A549 (cell line): ENCODE measurements at regions of chr12 and their contacts with region 1.

Region 1: GRCh38 chr12:117111821-117112595 is 12.8 kb upstream of the TESC start:
- DNase-seq: no peak
- ATAC-seq: no peak; a peak in 1 of 6 replicates
- H3K4me3 ChIP-seq: no peak overlapping the region
- H3K27ac ChIP-seq: peak overlapping the region in 1 of 2 experiments; percentile 48; a peak in 3 of 6 replicates
- H3K4me1 ChIP-seq: no peaks in the 10 kb centered on the region
- CTCF ChIP-seq: no peak
- EP300 ChIP-seq: no peak
- POLR2A ChIP-seq: no peak
- RAD21 ChIP-seq: no peak

Region 2: GRCh38 chr12:117100251-117100650 is 11.8 kb before region 1 on chr12:
- CTCF ChIA-PET with region 1: interaction called, 19 read pairs
- POLR2A ChIA-PET with region 1: no interaction called
- DNase-seq: peak; percentile 63 to 73
- ATAC-seq: peak; percentile 73 to 78
- H3K4me3 ChIP-seq: no peak overlapping the region
- H3K27ac ChIP-seq: peak overlapping the region; percentile 41 to 94; a peak in 4 of 6 replicates
- H3K4me1 ChIP-seq: peaks cover 26% of the 10 kb centered on the region; the same call in 2 of the 3 replicates
- CTCF ChIP-seq: peak; percentile 41; the same call in 2 of the 3 replicates
- EP300 ChIP-seq: no peak
- POLR2A ChIP-seq: no peak
- RAD21 ChIP-seq: peak; percentile 14 to 29; a peak in 2 of 5 replicates